Transverse colon (tissue), 4 donors: ENCODE measurements at regions of chr6 and their contacts with region 1.

Region 1: GRCh38 chr6:26581164-26581915 is 15.4 kb upstream of the ABT1 start:
- DNase-seq: no peak
- H3K4me3 ChIP-seq: no peak overlapping the region
- H3K27ac ChIP-seq: no peak overlapping the region
- H3K4me1 ChIP-seq: peaks cover 0 to 9% (median 4%) of the 10 kb centered on the region in 4 donors
- H3K27me3 ChIP-seq: peaks cover 87% of the 10 kb centered on the region
- CTCF ChIP-seq: no peak
- EP300 ChIP-seq: no peak
- POLR2A ChIP-seq: no peak

Region 2: GRCh38 chr6:26342106-26343004 is 239.0 kb before region 1 on chr6:
- in situ Hi-C with region 1: loop called in 3 of 4 experiments (anchors 10 kb)
- intact Hi-C with region 1: loop called (anchors 5 kb)
- DNase-seq: no peak
- H3K4me3 ChIP-seq: peak overlapping the region in 1 of 4 donors; percentile 20
- H3K27ac ChIP-seq: peak overlapping the region in 1 of 4 donors; percentile 24
- H3K4me1 ChIP-seq: peaks cover 0 to 7% (median 0%) of the 10 kb centered on the region in 4 donors
- H3K27me3 ChIP-seq: peaks cover 6% of the 10 kb centered on the region
- CTCF ChIP-seq: no peak
- EP300 ChIP-seq: no peak
- POLR2A ChIP-seq: no peak

Region 3: DNA sequence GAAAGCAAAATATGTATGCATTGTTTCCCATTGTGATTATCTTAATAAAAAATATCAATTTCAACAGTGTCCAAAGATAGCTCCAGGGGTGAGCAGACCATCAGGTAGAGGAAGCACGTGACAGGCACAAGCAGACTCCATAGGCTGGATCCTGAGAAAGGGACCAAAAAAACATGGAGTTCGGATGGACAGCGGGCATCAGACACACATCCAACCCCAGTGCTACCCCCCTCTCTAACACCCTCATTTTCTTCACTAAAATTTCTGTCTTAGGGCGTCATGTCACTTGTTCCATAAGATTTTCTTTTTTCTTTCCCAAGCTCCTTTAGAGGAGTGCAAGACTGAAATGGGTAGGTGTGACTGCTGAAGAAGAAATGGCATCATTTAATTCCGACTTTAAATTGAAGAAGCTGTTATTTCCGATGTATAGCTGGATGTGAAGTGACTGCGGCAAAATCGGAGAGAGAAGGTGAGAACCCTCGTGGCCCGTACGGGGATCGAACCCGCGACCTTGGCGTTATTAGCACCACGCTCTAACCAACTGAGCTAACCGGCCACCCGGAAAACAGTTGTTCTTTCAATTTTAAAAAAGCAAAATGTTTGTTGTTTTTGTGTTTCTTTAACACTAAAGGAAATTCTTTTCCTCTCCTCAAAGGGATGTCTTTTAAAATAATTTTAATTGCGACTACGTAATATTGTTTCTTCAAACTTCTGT is 655.9 kb after region 1 on chr6:
- in situ Hi-C with region 1: no loop called
- intact Hi-C with region 1: no loop called
- DNase-seq: no peak
- H3K4me3 ChIP-seq: no peak overlapping the region
- H3K27ac ChIP-seq: no peak overlapping the region
- H3K4me1 ChIP-seq: peaks cover 0 to 4% (median 0%) of the 10 kb centered on the region in 4 donors
- H3K27me3 ChIP-seq: peaks cover 97% of the 10 kb centered on the region
- CTCF ChIP-seq: no peak
- EP300 ChIP-seq: no peak
- POLR2A ChIP-seq: no peak